ENCODE measurements at regions of chr1 and their contacts with region 1.

Region 1: GRCh38 chr1:39098546-39099250 is 72.5 kb downstream of the NDUFS5 start:
- DNase-seq: peak; percentile 59
- H3K4me3 Mint-ChIP-seq: no peak overlapping the region
- H3K27ac Mint-ChIP-seq: no peak overlapping the region
- H3K4me1 Mint-ChIP-seq: peaks cover 19% of the 10 kb centered on the region
- H3K27me3 Mint-ChIP-seq: peaks cover 2% of the 10 kb centered on the region

Region 2: DNA sequence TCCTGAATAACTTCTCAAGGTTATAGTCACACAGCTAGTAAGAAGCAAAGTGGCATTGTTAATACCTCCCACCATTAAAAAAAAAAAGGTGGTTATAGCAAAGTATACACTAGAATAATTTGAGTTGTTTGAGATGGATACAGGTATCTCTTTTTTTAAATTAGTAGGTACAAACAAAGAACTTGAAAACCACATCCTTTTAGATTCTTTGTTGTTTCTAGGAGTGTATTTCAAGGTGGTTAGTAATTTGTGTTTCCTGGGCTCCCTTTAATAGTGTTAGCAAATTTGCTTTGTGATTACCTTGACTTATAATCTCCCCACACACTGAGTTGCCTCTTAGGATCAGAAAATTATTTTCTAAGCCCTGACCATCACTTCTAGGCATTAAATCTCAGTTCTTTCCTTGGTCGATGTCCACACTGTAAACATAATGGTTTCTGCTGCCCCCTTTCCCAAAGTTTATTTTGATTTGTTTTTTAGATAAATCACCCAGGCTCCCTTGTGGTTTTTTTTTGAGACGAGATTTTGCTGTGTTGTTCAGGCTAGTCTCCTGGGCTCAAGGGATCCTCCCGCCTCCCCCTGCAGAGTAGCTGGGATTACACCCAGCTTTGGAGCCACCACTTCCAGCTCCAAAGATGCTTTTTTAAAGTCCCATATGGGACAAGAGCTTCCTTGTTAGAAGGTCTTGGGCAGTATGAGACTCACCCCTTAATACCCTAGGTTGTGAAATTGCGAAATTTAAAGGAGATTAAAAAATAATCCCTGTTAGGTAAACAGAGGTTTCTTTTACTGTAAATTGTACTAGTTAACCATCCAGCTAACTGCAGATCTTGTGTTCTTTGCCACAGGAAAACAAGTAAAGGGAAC is 101.4 kb before region 1 on chr1:
- intact Hi-C with region 1: no loop called
- DNase-seq: no peak
- H3K4me3 Mint-ChIP-seq: peak overlapping the region; percentile 4
- H3K27ac Mint-ChIP-seq: peak overlapping the region; percentile 69
- H3K4me1 Mint-ChIP-seq: peaks cover 55% of the 10 kb centered on the region
- H3K27me3 Mint-ChIP-seq: no peaks in the 10 kb centered on the region

Region 3: GRCh38 chr1:39081266-39082009 is 17.3 kb before region 1 on chr1:
- intact Hi-C with region 1: no loop called
- DNase-seq: no peak
- H3K4me3 Mint-ChIP-seq: no peak overlapping the region
- H3K27ac Mint-ChIP-seq: no peak overlapping the region
- H3K4me1 Mint-ChIP-seq: peaks cover 5% of the 10 kb centered on the region
- H3K27me3 Mint-ChIP-seq: peaks cover 48% of the 10 kb centered on the region

Region 4: DNA sequence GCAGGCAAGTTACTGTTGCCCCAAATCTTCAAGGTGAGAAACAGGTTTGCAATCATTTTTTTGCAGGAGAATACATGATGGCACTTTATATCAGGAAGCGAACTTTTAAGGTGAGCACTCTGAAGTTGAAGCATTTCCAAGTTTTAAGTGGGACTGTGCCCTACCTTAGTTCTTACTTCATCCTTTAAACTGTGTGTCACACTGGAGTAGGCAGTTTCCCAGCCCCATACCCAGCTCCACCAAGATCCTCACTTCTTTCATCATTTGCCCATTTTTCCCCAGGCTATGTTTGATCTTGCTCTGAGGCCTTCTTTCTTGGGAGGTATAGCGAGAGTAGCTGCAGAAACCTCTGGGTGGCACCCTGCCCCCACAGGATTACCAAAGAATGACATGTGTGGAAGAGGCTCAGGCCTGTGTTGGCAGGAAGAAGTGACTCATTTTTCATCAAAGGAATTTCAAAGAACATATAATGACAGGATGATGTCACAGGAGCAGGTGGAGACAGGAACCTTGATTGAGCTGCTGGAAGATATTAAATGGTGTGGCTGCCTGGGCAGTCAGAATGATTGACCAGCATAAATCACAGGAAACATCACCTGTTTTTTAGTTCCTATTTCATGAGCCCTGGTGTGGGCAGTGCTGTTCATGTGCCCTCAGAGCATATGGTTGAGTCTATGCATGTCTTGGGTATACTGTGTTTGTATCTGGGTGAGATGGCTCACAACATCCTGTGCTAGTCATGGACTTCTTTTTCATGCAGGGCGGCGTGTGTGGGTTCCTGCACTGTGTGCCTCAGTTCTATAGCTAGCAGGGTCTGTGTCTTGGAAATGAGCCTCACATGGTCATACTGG is 85.0 kb after region 1 on chr1:
- intact Hi-C with region 1: loop called (anchors 2 kb)
- DNase-seq: peak; percentile 75
- H3K4me3 Mint-ChIP-seq: peak overlapping the region; percentile 5
- H3K27ac Mint-ChIP-seq: peak overlapping the region; percentile 86
- H3K4me1 Mint-ChIP-seq: peaks cover 43% of the 10 kb centered on the region
- H3K27me3 Mint-ChIP-seq: no peaks in the 10 kb centered on the region

Region 5: GRCh38 chr1:39258146-39258924 is 159.6 kb after region 1 on chr1:
- intact Hi-C with region 1: loop called (anchors 1 kb)
- DNase-seq: peak; percentile 37
- H3K4me3 Mint-ChIP-seq: no peak overlapping the region
- H3K27ac Mint-ChIP-seq: peak overlapping the region; percentile 46
- H3K4me1 Mint-ChIP-seq: peaks cover 32% of the 10 kb centered on the region
- H3K27me3 Mint-ChIP-seq: no peaks in the 10 kb centered on the region

Region 6: DNA sequence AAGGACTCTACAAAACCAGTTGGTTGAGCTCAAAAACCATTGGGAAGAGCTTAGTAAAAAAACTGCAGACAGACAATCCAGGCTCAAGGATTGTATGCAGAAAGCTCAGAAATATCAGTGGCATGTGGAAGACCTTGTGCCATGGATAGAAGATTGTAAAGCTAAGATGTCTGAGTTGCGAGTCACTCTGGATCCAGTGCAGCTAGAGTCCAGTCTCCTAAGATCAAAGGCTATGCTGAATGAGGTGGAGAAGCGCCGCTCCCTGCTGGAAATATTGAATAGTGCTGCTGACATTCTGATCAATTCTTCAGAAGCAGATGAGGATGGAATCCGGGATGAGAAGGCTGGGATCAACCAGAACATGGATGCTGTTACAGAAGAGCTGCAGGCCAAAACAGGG is 288.8 kb after region 1 on chr1:
- intact Hi-C with region 1: no loop called
- DNase-seq: no peak
- H3K4me3 Mint-ChIP-seq: no peak overlapping the region
- H3K27ac Mint-ChIP-seq: peak overlapping the region; percentile 50
- H3K4me1 Mint-ChIP-seq: peaks cover 19% of the 10 kb centered on the region
- H3K27me3 Mint-ChIP-seq: no peaks in the 10 kb centered on the region

Region 7: DNA sequence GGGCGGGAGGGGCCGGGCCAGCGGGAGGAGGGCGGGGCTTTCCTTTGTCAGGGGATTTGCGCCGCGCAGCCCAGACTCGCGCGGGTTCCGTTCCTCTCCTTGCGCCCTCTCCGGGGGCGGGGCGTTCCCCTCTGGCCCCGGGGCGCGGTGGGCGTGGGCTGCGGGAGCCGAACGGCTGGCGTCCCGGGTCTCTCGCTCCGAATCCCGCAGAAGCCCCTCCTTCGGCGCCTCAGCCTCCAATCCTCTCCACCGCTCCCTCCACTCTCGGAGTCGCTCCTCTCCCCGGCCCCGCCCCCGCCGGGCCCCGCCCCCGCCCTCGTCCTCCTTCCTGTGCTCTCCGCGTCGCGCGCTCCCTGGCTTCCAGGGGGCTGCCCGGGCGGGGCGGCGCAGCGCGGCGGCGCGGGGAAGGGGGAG is 309.9 kb after region 1 on chr1:
- intact Hi-C with region 1: loop called (anchors 10 kb)
- DNase-seq: peak; percentile 81
- H3K4me3 Mint-ChIP-seq: peak overlapping the region; percentile 88
- H3K27ac Mint-ChIP-seq: no peak overlapping the region
- H3K4me1 Mint-ChIP-seq: peaks cover 43% of the 10 kb centered on the region
- H3K27me3 Mint-ChIP-seq: no peaks in the 10 kb centered on the region

Region 8: DNA sequence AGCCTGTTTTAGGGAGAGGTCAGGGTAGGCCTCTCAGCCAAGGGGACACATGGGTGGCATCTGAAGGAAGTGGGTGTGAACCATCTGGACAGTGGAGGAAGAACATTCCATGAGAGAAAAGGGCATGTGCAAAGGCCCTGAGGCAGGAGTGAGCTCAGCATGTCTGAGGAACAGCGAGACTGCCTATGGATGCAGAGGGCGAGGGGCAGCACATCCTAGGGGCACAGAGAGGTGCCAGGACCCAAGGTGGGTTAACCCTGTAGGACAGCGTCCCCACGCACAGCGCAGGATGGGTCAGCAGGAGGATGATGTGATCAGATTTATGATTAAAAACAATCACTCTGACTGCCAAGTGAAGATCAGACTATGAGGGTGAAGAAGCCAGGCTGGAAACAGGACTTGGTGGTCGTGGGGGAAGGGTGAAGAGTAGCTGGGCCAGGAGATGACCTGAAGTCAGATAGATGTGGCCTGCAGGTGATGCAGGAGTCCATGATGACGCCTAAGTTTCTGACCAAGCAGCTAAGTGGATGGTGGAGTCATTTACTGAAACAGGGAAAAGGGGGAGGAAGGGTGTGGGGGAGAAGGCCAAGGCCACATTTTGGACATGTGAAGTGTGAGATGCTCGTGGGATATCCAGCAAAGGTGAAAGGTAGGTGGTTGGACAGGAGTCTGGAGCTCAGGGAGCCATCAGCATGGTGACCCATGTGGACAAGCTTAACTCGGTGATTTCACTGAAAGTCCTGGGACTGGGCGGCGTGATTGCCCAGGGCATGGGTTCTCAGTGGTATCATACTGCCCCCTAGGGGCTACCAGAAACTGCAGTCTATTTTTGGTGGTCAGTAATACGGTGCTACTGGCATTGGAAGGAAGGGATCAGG is 440.1 kb after region 1 on chr1:
- intact Hi-C with region 1: loop called (anchors 1 kb)
- DNase-seq: peak; percentile 26
- H3K4me3 Mint-ChIP-seq: no peak overlapping the region
- H3K27ac Mint-ChIP-seq: no peak overlapping the region
- H3K4me1 Mint-ChIP-seq: no peaks in the 10 kb centered on the region
- H3K27me3 Mint-ChIP-seq: no peaks in the 10 kb centered on the region

Region 9: DNA sequence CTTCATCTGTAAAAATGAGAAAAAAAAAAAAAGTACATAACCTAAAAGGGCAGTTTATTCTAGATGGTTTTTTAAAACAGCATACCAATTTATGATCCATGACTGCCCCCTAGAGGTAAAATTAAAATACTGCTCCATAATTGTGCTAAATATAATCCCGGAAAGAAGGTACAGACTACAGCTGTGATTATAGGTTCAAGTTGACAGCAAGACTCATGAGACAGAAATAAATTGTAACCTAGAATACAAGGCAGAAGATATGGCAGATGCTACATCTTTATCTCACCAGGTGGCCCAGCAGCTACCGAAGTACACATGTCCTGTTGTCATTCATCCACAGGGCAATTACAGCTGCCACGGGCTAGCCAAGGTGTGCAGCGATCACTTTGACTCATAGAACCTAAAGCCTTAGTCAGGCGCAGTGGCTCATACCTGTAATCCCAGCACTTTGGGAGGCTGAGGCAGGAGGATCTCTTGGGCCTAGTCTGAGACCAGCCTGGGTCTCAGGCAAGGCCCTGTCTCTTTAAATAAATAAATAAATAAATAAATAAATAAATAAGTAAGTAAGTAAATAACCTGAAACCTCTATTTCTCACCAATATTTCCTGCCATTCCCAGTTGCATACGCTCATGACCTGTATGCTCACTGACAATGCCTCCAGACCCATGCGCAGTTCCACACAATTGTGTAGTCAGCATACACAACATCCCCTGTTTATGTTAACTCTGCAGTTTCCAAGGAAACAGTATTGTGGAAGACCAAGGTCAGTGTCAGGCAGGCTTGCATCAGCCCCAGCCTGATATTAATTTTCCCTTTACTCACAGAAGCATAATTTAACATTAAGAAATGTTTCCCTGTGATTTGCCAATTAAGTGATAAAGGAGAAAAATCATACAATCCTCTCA is 621.6 kb after region 1 on chr1:
- intact Hi-C with region 1: loop called (anchors 10 kb)
- DNase-seq: no peak
- H3K4me3 Mint-ChIP-seq: no peak overlapping the region
- H3K27ac Mint-ChIP-seq: no peak overlapping the region
- H3K4me1 Mint-ChIP-seq: no peaks in the 10 kb centered on the region
- H3K27me3 Mint-ChIP-seq: peaks cover 50% of the 10 kb centered on the region